ENCODE measurements at regions of chr9 and their contacts with region 1.

Region 1: GRCh38 chr9:92265159-92265558 is 28.3 kb downstream of the IARS1 start:
- DNase-seq: no peak
- H3K4me3 ChIP-seq: no peak overlapping the region
- H3K27ac ChIP-seq: no peak overlapping the region
- H3K4me1 ChIP-seq: no peaks in the 10 kb centered on the region
- H3K27me3 ChIP-seq: no peaks in the 10 kb centered on the region
- CTCF ChIP-seq: no peak
- EP300 ChIP-seq: no peak
- POLR2A ChIP-seq: no peak
- RAD21 ChIP-seq: no peak

Region 2: DNA sequence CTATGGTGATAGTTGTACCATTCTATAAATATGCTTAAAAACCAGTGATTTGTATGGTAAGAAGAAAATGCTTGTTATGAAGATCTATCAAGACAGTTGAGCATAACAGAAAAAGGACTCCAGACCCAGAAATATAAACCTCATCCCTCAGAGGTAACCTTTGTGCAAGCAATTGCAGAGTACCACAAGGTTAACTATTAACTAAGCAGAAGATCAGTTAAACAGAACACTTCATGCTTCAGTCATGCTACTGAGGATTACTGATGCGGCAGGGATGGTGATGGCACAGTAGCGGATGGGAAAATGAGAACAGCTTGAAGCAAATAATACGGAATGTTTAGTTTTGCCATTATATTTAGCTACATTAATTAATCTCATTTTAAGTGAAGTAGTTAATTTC is 17.2 kb before region 1 on chr9:
- CTCF ChIA-PET with region 1: interaction called, 6 read pairs
- POLR2A ChIA-PET with region 1: interaction called, 16 read pairs
- DNase-seq: no peak
- H3K4me3 ChIP-seq: no peak overlapping the region
- H3K27ac ChIP-seq: no peak overlapping the region
- H3K4me1 ChIP-seq: no peaks in the 10 kb centered on the region
- H3K27me3 ChIP-seq: no peaks in the 10 kb centered on the region
- CTCF ChIP-seq: no peak
- EP300 ChIP-seq: no peak
- POLR2A ChIP-seq: no peak
- RAD21 ChIP-seq: no peak

Region 3: GRCh38 chr9:92276331-92277032 is 11.3 kb after region 1 on chr9:
- CTCF ChIA-PET with region 1: interaction called, 4 read pairs
- POLR2A ChIA-PET with region 1: interaction called, 66 read pairs
- DNase-seq: no peak
- H3K4me3 ChIP-seq: no peak overlapping the region
- H3K27ac ChIP-seq: no peak overlapping the region
- H3K4me1 ChIP-seq: no peaks in the 10 kb centered on the region
- H3K27me3 ChIP-seq: no peaks in the 10 kb centered on the region
- CTCF ChIP-seq: no peak
- EP300 ChIP-seq: no peak
- POLR2A ChIP-seq: no peak
- RAD21 ChIP-seq: no peak

Region 4: GRCh38 chr9:92308893-92309292 is 43.7 kb after region 1 on chr9:
- CTCF ChIA-PET with region 1: no interaction called
- POLR2A ChIA-PET with region 1: no interaction called
- DNase-seq: no peak
- H3K4me3 ChIP-seq: no peak overlapping the region
- H3K27ac ChIP-seq: no peak overlapping the region
- H3K4me1 ChIP-seq: no peaks in the 10 kb centered on the region
- H3K27me3 ChIP-seq: no peaks in the 10 kb centered on the region
- CTCF ChIP-seq: no peak
- EP300 ChIP-seq: no peak
- POLR2A ChIP-seq: no peak
- RAD21 ChIP-seq: no peak

Measured in H1 (cell line).